ENCODE measurements at regions of chr5 and their contacts with region 1.

Region 1: GRCh38 chr5:41510176-41510831 is at the start of gene PLCXD3:
- DNase-seq: peak in 6 of 7 donors; percentile 15 to 80 (median 23)
- H3K4me3 ChIP-seq: peak within 1 kb of the TSS in 2 of 4 donors; percentile 3 to 55
- H3K27ac ChIP-seq: peak within 1 kb of the TSS in 2 of 5 donors; percentile 21 to 54
- H3K4me1 ChIP-seq: no peaks in the 10 kb centered on the region
- H3K27me3 ChIP-seq: no peaks in the 10 kb centered on the region
- CTCF ChIP-seq: no peak
- POLR2A ChIP-seq: no peak
- total RNA-seq, gene PLCXD3: 0.72 to 48.7 (median 15.5) TPM

Region 2: GRCh38 chr5:40904205-40904993 is 605.9 kb before region 1 on chr5:
- intact Hi-C with region 1: loop called in 1 of 2 experiments (anchors 10 kb)
- DNase-seq: peak; percentile 75 to 94 (median 85)
- H3K4me3 ChIP-seq: no peak overlapping the region
- H3K27ac ChIP-seq: peak overlapping the region; percentile 45 to 84 (median 83)
- H3K4me1 ChIP-seq: peaks cover 34 to 36% of the 10 kb centered on the region in 2 donors
- H3K27me3 ChIP-seq: no peaks in the 10 kb centered on the region
- CTCF ChIP-seq: peak; percentile 96 to 99 (median 98)
- POLR2A ChIP-seq: no peak

Region 3: GRCh38 chr5:41270423-41271251 is 239.7 kb before region 1 on chr5:
- intact Hi-C with region 1: loop called in 1 of 2 experiments (anchors 10 kb)
- DNase-seq: peak; percentile 41 to 81 (median 52)
- H3K4me3 ChIP-seq: no peak overlapping the region
- H3K27ac ChIP-seq: no peak overlapping the region
- H3K4me1 ChIP-seq: no peaks in the 10 kb centered on the region
- H3K27me3 ChIP-seq: no peaks in the 10 kb centered on the region
- CTCF ChIP-seq: peak; percentile 62 to 87 (median 82)
- POLR2A ChIP-seq: no peak

Region 4: DNA sequence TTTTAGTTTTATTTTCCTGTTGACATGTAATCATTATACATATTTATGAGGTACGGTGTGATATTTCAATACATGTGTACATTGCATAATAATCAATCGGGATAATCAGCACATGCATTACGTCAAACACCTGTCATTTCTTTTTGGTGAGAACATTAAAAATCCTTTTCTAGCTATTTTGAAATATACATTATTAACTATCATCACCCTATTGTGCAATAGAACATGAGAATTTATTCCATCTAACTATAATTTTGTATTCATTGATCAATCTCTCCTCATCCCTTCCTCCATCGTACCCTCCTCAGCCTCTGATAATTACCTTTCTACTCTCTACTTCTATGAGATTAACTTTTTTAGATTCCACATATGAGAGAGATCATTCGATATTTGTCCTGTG is 742.0 kb after region 1 on chr5:
- intact Hi-C with region 1: no loop called
- DNase-seq: no peak
- H3K4me3 ChIP-seq: no peak overlapping the region
- H3K27ac ChIP-seq: no peak overlapping the region
- H3K4me1 ChIP-seq: no peaks in the 10 kb centered on the region
- H3K27me3 ChIP-seq: no peaks in the 10 kb centered on the region
- CTCF ChIP-seq: no peak
- POLR2A ChIP-seq: no peak

Measured in adrenal gland (tissue), 19 donors.